ENCODE measurements at regions of chr15 and their contacts with region 1.

Region 1: GRCh38 chr15:80977627-80978036 is 12.0 kb downstream of the MESD start:
- DNase-seq: no peak
- H3K4me3 ChIP-seq: no peak overlapping the region
- H3K27ac ChIP-seq: no peak overlapping the region
- H3K4me1 ChIP-seq: 0 out of 2 replicates have a peak, but pooled peaks cover 12% of the 10 kb centered on the region
- H3K27me3 ChIP-seq: no peaks in the 10 kb centered on the region
- CTCF ChIP-seq: no peak

Region 2: GRCh38 chr15:80785335-80785734 is 192.3 kb before region 1 on chr15:
- CTCF ChIA-PET with region 1: no interaction called
- POLR2A ChIA-PET with region 1: interaction called, 19 read pairs
- intact Hi-C with region 1: no loop called
- DNase-seq: no peak
- H3K4me3 ChIP-seq: no peak overlapping the region
- H3K27ac ChIP-seq: no peak overlapping the region
- H3K4me1 ChIP-seq: peaks cover 17% of the 10 kb centered on the region
- H3K27me3 ChIP-seq: no peaks in the 10 kb centered on the region
- CTCF ChIP-seq: no peak

Region 3: GRCh38 chr15:80989518-80990478 is 12.2 kb after region 1 on chr15 and contains the start of gene MESD:
- CTCF ChIA-PET with region 1: no interaction called
- POLR2A ChIA-PET with region 1: interaction called, 20 read pairs
- intact Hi-C with region 1: no loop called
- DNase-seq: peak; percentile 74 to 92
- H3K4me3 ChIP-seq: peak within 1 kb of the TSS; percentile 87
- H3K27ac ChIP-seq: peak within 1 kb of the TSS; percentile 58
- H3K4me1 ChIP-seq: peaks cover 24% of the 10 kb centered on the region
- H3K27me3 ChIP-seq: no peaks in the 10 kb centered on the region
- CTCF ChIP-seq: no peak
- total RNA-seq, gene MESD: 21.9 and 22.8 TPM in 2 replicates